ENCODE measurements at regions of chr17 and their contacts with region 1.

Region 1: DNA sequence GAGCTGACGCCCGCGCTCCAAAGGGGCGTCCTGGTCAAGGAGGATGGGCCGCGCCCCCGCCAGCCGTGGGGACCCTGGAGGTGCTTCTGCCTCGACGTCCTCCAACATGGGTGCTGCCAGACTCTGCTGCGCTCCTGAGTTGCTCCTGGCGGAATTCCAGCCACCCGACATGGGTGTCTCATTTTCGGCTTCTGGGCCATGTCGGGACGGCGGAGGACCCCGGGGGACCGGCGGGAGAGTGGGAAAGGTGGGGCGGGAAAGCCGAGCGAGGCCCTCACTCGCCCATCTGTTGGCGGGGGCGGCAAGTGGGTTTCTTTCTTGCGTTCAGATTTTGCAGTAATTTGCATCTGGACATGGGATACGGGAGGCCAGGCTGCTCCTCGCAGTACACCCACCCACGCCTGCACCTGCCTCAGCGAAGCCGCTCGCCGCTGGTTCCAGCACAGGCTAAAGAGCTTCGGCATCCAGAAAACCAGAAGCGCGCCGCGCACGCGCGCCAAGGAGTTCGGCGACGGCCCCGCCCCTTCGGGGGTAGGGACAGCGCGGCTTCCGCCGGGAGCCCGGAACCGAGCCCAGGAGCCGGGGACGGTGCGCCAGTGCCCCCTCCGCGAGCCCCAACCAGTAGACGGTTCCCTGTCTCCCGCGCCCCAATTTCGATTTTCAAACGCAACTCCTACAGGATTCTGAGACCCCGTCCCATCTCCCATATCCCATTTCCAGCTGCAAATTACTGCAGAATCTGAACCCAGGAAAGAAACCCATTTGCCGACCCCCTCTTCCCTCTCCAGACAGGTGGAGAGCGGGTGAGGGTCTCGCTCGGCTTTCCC is at the start of gene ARMC7:
- DNase-seq: peak; percentile 95
- H3K4me3 Mint-ChIP-seq: peak within 1 kb of the TSS; percentile 85
- H3K27ac Mint-ChIP-seq: peak within 1 kb of the TSS; percentile 94
- H3K4me1 Mint-ChIP-seq: peaks cover 33% of the 10 kb centered on the region
- H3K27me3 Mint-ChIP-seq: no peaks in the 10 kb centered on the region
- CTCF ChIP-seq: no peak
- total RNA-seq, gene ARMC7: 18.6 and 19.8 TPM in 2 replicates

Region 2: DNA sequence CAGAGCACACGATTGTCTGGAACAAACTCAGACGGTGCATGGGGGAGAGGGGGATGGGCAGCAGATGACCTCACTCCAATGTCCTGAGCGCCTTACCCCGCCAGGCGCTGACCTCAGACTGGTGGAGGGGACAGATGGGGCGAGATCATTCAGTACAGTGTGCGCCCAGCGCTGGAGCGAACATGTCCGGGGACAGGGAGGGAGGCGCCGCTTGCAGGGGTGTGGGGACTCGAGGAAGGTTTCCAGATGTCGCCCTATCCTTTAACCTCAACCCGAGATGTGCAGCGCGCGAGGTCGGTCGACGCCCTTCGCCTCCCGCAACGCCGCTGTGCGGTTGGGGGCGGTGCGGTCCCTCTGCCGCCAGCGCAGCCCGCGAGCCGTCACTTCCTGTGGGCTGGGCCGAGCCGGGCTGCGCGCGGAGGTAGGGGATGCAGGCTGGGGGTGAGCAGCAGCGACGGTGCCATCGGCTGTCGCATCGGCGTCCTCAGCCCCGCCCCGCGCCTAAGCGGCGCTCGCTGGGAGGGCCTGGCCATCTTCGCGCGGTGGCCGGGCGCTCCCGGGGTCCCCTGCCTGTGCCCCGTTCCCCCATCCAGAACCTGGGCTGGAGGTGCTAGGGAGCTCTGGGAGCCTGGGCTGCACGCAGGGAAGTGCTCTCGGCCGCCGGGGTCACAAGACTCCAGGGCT is 127.5 kb before region 1 on chr17:
- CTCF ChIA-PET with region 1: no interaction called
- intact Hi-C with region 1: no loop called
- DNase-seq: peak; percentile 87
- H3K4me3 Mint-ChIP-seq: peak overlapping the region; percentile 79
- H3K27ac Mint-ChIP-seq: peak overlapping the region; percentile 82
- H3K4me1 Mint-ChIP-seq: peaks cover 36% of the 10 kb centered on the region
- H3K27me3 Mint-ChIP-seq: no peaks in the 10 kb centered on the region
- CTCF ChIP-seq: no peak

Region 3: DNA sequence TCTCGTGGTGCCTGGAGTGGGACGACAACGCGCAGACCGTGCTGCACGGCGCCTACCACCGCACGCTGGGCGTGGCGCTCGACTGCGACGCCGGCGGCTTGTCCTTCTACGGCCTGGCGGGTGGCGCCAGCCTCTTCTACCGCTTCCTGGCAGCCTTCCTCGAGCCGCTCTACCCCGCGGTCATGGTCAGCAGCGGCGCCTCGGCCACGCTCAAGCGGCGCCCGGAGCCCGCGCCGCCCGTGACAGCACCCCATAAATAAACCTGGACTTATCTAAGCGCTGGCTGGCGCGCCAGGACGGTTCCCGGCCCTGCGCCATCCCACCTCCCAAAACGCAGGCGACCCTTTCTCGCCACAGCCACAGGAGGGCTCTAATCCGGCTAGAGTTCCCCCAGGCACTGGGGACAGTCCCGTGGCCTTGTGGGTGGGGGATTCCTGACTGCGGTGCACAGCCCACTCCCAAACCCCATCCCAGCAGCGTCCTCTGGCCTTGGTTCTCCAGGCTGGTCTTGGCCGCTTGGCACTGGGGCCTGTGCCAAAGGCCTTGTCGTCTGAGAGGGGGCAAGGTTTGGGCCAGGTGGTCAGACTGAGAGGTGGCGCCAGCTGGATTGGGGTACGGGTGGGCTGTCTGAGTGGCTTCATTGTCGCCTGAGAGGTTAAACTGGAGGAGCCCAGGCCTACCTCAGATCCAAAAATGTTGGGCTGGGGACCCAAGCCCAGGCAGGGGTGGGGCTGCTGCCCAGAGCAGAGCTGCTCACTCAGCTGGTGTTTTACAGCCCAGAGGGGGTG is 31.9 kb before region 1 on chr17:
- CTCF ChIA-PET with region 1: interaction called, 10 read pairs
- intact Hi-C with region 1: no loop called
- DNase-seq: peak; percentile 71
- H3K4me3 Mint-ChIP-seq: peak overlapping the region; percentile 66
- H3K27ac Mint-ChIP-seq: peak overlapping the region; percentile 84
- H3K4me1 Mint-ChIP-seq: peaks cover 23% of the 10 kb centered on the region
- H3K27me3 Mint-ChIP-seq: no peaks in the 10 kb centered on the region
- CTCF ChIP-seq: no peak

Region 4: DNA sequence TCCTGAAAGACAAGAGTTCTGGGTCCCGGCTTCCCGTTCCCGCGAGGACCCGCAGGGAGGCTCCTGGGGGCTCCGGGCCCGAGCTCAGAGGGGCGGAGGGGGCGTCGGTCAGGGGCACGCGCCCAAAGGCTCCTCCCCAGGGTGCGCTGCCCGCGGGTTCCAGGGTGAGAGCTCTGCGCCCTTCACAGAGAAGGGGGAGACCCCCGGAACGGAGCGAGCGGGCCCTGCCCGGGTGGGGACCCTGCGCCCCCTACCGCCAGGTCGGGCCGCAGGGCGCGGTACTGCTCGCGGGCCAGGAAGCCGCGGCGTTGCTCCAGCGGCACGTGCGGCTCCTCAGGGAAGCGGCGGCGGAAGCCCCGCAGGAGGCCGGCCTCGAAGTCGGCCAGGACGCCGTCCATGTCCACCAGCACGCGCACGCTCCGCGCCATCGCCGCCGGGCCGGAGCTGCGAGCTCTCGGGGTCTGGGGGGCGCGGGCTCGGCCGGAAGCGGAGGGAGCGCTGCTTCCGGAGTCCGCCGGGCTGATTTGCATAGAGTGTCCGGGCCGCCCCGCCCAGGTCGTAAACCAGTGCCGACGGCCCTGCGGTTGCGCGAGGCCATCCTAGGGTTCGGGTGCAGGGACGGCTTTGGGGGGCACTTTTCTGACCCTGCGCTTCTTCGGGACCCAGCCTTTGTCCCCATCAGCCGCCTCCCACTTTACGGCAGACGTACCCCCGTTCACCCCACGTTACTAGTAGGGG is 21.8 kb after region 1 on chr17 and contains the start of gene NT5C:
- CTCF ChIA-PET with region 1: interaction called, 21 read pairs
- intact Hi-C with region 1: no loop called
- DNase-seq: peak; percentile 85
- H3K4me3 Mint-ChIP-seq: peak within 1 kb of the TSS; percentile 82
- H3K27ac Mint-ChIP-seq: peak within 1 kb of the TSS; percentile 72
- H3K4me1 Mint-ChIP-seq: peaks cover 10% of the 10 kb centered on the region
- H3K27me3 Mint-ChIP-seq: no peaks in the 10 kb centered on the region
- CTCF ChIP-seq: peak; percentile 80
- total RNA-seq, gene NT5C: 56.6 and 58.2 TPM in 2 replicates

Region 5: DNA sequence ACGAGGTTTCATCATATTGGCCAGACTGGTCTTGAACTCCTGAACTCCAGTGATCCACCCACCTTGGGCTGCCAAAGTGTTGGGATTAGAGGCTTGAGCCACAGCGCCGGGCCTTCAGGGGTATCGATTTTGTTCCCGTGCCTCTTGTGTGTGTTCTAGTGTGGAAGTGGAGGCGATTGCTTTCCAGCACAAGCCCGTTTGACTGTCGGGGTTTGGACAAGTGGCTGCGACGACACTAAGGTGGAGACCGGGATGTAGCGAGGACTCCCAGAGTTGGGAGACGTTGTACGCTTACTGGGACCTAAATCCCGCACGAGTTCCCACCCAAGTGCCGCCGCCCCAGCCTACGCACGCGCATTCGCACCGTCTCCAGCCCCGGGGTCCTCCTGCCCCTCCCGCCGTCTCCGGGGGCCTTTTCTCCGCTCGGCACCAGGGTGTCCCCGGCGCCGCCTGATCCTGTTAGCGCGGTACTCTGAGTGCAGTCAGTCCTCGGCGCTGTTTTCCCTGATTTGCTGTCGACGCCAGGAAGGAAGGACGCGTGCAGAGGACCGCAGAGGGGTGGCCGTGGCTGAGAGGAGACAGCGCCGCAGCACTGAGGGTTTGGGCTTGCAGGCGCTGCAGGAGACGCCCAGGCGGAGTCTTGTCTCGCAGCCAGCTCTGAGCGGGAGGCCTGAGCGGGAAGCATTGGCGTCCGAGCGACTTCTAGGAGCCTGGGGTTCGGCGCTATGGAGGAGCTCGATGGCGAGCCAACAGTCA is 95.6 kb after region 1 on chr17 and contains the start of gene NUP85:
- CTCF ChIA-PET with region 1: interaction called, 59 read pairs
- intact Hi-C with region 1: loop called (anchors 1 kb)
- DNase-seq: peak; percentile 96
- H3K4me3 Mint-ChIP-seq: peak within 1 kb of the TSS; percentile 89
- H3K27ac Mint-ChIP-seq: peak within 1 kb of the TSS; percentile 99
- H3K4me1 Mint-ChIP-seq: peaks cover 7% of the 10 kb centered on the region
- H3K27me3 Mint-ChIP-seq: no peaks in the 10 kb centered on the region
- CTCF ChIP-seq: no peak
- total RNA-seq, gene NUP85: 116 and 117 TPM in 2 replicates

Measured in Calu3 (cell line).